Prostate gland (tissue), 2 donors: ENCODE measurements at regions of chr3 and their contacts with region 1.

Region 1: DNA sequence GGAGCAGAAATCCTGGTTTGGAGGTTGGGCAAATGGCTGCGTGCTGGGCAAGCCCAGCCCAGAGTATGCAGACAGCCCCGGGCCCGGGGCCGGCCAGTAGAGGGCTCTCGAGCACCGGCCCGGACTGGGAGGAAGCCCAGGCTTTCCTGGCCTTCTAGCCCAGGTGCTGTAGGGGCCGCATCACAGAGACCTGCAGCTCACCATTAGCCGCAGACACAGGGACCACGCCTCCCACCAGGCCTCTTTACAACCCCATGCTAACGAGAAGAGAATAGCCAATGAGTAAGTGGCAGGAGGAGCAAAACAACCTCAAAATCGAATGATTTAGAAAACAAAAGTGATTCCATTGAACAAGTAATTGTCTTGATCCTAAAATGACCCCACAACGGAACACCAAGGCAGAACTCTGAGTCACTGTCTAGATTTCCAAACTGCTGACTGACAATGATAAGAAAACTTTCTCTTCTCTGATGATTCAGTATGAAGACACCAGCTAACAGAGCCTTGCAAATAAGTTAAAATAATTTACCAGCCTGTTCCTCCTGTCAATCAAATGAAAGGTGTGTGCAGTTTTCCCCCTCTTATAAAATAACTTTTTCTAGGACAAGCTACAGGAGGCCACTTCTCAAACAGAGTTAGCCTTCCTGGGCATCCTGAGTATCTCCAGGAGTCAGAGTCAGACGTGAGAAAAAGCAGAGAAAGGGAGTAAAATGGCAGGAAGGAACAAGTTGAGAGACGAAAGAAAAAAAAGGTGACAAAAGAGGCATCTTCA is 102.2 kb downstream of the DGKG start:
- DNase-seq: peak; percentile 45
- H3K4me3 ChIP-seq: no peak overlapping the region
- H3K27ac ChIP-seq: no peak overlapping the region
- H3K4me1 ChIP-seq: no peaks in the 10 kb centered on the region
- H3K27me3 ChIP-seq: no peaks in the 10 kb centered on the region
- CTCF ChIP-seq: peak; percentile 31 to 78 (median 67)
- POLR2A ChIP-seq: no peak

Region 2: GRCh38 chr3:185316738-185317407 is 942.9 kb before region 1 on chr3:
- intact Hi-C with region 1: no loop called
- DNase-seq: no peak
- H3K4me3 ChIP-seq: no peak overlapping the region
- H3K27ac ChIP-seq: no peak overlapping the region
- H3K4me1 ChIP-seq: no peaks in the 10 kb centered on the region
- H3K27me3 ChIP-seq: no peaks in the 10 kb centered on the region
- CTCF ChIP-seq: no peak
- POLR2A ChIP-seq: no peak

Region 3: DNA sequence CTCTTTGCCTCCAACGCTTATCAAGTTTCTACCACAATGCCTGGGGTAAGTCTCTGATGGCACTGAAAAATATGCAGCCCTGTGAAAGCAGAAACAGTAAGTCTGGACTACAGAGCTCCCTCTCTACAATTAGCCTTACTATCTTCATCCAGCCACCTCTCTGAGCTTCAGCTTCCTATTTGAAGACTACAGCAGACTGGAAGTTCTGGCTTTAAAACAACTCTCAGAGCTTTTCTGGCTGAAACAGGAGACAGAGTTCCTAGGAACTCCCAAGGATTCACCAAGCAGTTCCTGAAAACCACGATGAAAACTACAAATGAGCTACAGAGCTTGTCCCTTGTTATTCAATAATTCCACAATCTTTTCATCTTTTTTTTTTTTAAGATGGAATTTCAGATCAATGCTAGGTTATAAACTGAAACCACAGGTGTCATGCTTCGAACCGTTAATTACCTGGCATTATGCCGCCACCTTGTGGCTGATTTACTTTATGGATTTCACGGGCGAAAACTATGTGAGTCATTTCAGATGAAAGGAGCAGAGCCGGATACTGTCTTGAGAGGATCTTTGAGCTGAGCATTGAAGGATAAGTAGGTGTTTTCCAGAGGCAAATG is 280.5 kb after region 1 on chr3:
- intact Hi-C with region 1: loop called (anchors 2 kb)
- DNase-seq: peak; percentile 77
- H3K4me3 ChIP-seq: no peak overlapping the region
- H3K27ac ChIP-seq: no peak overlapping the region
- H3K4me1 ChIP-seq: no peaks in the 10 kb centered on the region
- H3K27me3 ChIP-seq: no peaks in the 10 kb centered on the region
- CTCF ChIP-seq: peak; percentile 65 to 85 (median 80)
- POLR2A ChIP-seq: no peak